ENCODE measurements at regions of chr9 and their contacts with region 1.

Region 1: GRCh38 chr9:613771-614347 is 227.6 kb upstream of the DMRT1 start:
- DNase-seq: peak in 3 of 4 donors; percentile 60 to 83 (median 81)
- ATAC-seq: peak; percentile 95
- H3K4me3 ChIP-seq: no peak overlapping the region
- H3K27ac ChIP-seq: peak overlapping the region; percentile 9 to 25
- H3K4me1 ChIP-seq: peaks cover 8 to 11% of the 10 kb centered on the region in 2 donors
- H3K27me3 ChIP-seq: no peaks in the 10 kb centered on the region
- CTCF ChIP-seq: peak; percentile 48 to 67

Region 2: GRCh38 chr9:763692-764524 is 150.0 kb after region 1 on chr9:
- intact Hi-C with region 1: loop called in 1 of 2 experiments (anchors 5 kb)
- DNase-seq: peak in 2 of 4 donors; percentile 50 to 53
- ATAC-seq: peak; percentile 97
- H3K4me3 ChIP-seq: no peak overlapping the region
- H3K27ac ChIP-seq: no peak overlapping the region
- H3K4me1 ChIP-seq: peaks cover 0 to 2% of the 10 kb centered on the region in 2 donors
- H3K27me3 ChIP-seq: no peaks in the 10 kb centered on the region
- CTCF ChIP-seq: peak; percentile 69 to 85

Region 3: GRCh38 chr9:806285-807156 is 192.7 kb after region 1 on chr9:
- intact Hi-C with region 1: loop called in 1 of 2 experiments (anchors 2 kb)
- DNase-seq: peak in 2 of 4 donors; percentile 18 to 36
- ATAC-seq: peak; percentile 54
- H3K4me3 ChIP-seq: no peak overlapping the region
- H3K27ac ChIP-seq: no peak overlapping the region
- H3K4me1 ChIP-seq: no peaks in the 10 kb centered on the region
- H3K27me3 ChIP-seq: no peaks in the 10 kb centered on the region
- CTCF ChIP-seq: peak; percentile 50 to 61